WTC11 (cell line): ENCODE measurements at regions of chr20 and their contacts with region 1.

Region 1: DNA sequence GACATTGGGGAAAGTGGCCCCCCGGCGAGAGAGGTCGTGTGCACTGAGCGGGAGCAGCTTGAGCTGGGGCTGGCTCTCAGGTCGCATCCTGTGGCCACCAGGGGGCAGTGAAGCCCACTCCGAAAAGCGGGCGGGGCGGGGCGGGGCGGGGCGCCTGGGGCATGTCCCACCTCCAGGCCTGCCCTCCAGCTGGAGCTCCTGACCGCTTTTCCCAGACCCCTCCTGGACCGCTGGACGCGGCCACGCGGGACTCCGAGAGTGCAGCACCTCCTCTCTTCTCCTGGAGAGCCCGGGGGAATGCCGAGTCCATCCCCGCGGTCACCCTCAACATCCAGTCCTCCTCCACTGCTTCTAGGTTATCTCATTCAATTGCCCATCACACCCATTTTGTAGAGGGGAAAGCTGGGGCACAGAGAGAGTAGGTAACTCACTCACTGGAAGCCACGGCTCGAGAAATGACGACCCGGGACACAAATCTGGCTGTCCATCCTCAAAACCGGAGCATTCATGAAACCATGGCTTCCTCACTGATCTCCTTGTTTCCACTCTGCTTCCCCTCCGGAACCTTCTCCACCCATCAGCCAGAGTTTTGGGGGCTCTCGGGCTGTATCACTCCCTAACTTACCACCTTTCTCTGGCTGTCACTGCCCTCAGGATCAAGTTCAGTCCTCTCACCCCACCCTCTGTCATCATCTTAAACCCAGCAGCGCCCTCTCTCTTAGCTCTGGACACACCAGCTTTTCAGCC is 24.1 kb downstream of the COX4I2 start:
- DNase-seq: peak; percentile 87
- ATAC-seq: peak; percentile 84
- H3K4me3 Mint-ChIP-seq: peak overlapping the region; percentile 74
- H3K27ac Mint-ChIP-seq: peak overlapping the region; percentile 79
- H3K4me1 Mint-ChIP-seq: peaks cover 23% of the 10 kb centered on the region
- H3K27me3 Mint-ChIP-seq: no peaks in the 10 kb centered on the region
- CTCF ChIP-seq: peak; percentile 88

Region 2: DNA sequence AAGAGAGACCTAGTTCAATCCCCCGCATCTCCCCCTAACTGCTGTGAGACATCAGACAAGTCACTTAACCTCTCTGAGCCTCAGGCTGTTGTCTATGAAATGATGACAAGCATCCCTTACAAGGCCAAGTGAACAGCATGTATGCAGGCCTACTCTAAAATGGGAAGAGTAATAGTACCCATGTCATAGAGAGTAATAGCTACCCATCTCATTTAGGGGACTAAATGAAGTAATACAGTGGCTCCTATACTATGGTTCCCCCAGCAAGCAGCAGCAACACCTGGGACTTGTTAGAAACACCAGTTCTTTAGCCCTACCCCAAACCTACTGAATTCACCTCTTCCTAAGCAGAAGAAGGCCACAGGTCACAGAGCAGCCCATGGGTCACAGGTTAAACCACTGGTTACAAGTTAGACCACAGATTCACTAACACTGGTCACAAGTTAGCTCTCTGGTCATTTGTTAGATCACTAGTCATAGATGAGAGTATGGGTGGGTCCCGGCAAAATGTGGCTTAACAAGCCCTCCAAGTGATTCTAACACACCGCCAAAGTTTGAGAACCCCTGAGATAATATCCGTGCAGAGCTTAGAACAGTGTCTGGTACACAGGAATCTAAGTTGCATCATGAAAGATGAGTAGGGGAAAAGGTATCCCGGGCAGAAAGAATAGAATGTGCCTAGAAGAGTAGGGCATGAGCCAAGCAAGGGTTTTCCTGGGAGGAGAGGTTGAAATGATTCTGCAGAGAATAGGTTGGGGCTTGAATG is 188.3 kb before region 1 on chr20:
- CTCF ChIA-PET with region 1: no interaction called
- POLR2A ChIA-PET with region 1: no interaction called
- DNase-seq: no peak
- ATAC-seq: no peak
- H3K4me3 Mint-ChIP-seq: no peak overlapping the region
- H3K27ac Mint-ChIP-seq: no peak overlapping the region
- H3K4me1 Mint-ChIP-seq: no peaks in the 10 kb centered on the region
- H3K27me3 Mint-ChIP-seq: peaks cover 56% of the 10 kb centered on the region
- CTCF ChIP-seq: no peak

Region 3: DNA sequence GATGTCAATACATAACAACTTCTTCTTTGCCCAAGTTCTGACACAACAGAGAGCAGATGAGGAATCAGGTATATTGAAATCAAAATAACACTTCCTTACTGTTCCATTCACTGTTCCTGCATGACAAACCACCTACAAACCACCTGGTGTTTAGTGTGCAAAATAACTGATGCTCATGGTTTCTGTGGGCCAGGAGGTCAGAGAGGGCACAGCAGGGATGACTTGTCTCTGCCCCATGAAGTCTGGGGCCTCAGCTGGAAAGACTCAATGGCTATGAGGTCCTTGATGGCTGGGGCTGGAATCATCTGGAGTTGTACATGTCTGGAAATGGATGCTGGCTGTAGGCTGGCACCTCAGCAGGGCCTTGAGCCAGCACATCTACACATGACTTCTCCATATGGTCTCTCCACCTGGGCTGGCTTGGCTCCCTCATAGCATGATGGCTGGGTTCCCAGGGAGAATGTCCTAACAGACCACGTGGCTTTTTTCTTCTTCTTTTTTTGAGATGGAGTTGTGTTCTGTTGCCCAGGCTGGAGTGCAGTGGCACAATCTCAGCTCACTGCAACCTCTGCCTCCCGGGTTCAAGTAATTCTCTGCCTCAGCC is 31.5 kb before region 1 on chr20:
- CTCF ChIA-PET with region 1: interaction called, 69 read pairs
- POLR2A ChIA-PET with region 1: interaction called, 6 read pairs
- DNase-seq: no peak
- ATAC-seq: no peak
- H3K4me3 Mint-ChIP-seq: no peak overlapping the region
- H3K27ac Mint-ChIP-seq: no peak overlapping the region
- H3K4me1 Mint-ChIP-seq: no peaks in the 10 kb centered on the region
- H3K27me3 Mint-ChIP-seq: no peaks in the 10 kb centered on the region
- CTCF ChIP-seq: no peak

Region 4: GRCh38 chr20:31674895-31675827 is 13.4 kb after region 1 on chr20:
- CTCF ChIA-PET with region 1: interaction called, 49 read pairs
- POLR2A ChIA-PET with region 1: no interaction called
- DNase-seq: no peak
- ATAC-seq: no peak
- H3K4me3 Mint-ChIP-seq: no peak overlapping the region
- H3K27ac Mint-ChIP-seq: peak overlapping the region; percentile 80
- H3K4me1 Mint-ChIP-seq: peaks cover 37% of the 10 kb centered on the region
- H3K27me3 Mint-ChIP-seq: no peaks in the 10 kb centered on the region
- CTCF ChIP-seq: no peak

Region 5: DNA sequence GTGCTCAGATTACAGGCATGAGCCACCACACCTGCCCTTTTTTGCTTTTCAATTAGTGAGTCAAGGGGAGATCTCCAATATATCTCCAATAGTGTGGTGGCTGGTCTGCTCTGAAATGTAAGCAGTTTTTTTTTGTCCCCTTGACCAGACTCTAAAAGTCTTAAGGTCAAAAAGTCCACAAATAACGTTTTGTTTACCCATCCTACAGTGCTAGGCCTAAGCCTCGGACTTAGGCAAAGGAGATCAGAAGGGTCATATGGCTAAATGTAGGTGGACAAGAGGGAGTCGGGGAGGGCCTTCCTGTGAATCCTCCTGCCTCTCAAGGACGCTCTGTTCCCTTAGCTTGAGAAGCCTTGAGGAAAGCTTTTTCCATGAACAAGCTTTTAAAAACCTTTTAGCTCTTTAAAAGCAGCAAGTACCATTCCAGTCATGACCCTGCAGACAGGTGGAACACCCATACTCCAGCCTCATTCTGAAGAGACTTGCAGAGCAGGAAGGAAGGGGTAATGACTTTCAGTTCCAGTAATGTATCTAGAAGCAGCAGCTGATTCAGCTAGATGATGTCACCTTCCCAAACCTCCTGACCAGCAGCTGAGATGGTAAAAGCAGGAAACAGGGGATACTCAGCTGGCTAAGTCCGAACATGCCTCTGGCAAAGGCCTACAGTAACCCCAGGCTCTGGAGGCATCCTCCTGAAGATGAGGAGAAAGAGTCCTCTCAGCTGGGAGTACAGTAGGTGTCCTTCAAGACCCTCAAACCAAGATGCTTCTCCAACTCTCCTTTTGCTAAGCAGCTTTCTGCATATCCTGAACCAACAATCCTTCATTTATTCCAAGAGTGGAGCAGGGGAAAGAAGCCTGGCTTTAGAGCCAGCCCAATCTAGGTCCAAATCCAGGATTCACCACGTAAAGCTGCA is 37.3 kb after region 1 on chr20:
- CTCF ChIA-PET with region 1: interaction called, 32 read pairs
- POLR2A ChIA-PET with region 1: interaction called, 3 read pairs
- DNase-seq: no peak
- ATAC-seq: no peak
- H3K4me3 Mint-ChIP-seq: no peak overlapping the region
- H3K27ac Mint-ChIP-seq: peak overlapping the region; percentile 69; the same call in 1 of the 2 replicates
- H3K4me1 Mint-ChIP-seq: peaks cover 48% of the 10 kb centered on the region
- H3K27me3 Mint-ChIP-seq: no peaks in the 10 kb centered on the region
- CTCF ChIP-seq: no peak

Region 6: DNA sequence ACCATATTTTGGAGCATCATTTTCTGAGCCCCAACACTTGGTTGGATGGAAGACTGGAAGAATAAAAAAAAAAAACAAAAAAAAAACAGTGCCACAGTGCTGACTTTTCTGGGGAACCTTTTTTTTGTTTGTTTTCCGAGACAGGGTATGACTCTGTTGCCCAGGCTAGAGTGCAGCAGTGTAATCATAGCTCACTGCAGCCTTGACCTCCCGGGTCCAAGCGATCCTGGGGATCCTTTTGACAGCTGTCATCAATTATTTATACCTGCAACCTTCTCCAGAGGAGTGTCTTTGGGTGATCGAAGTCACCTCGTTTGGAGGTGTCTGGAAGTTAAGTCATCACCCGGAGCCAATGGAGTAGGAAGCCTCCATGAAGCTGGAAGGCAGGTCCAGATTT is 69.5 kb after region 1 on chr20:
- CTCF ChIA-PET with region 1: interaction called, 25 read pairs
- POLR2A ChIA-PET with region 1: no interaction called
- DNase-seq: no peak
- ATAC-seq: no peak
- H3K4me3 Mint-ChIP-seq: no peak overlapping the region
- H3K27ac Mint-ChIP-seq: no peak overlapping the region
- H3K4me1 Mint-ChIP-seq: no peaks in the 10 kb centered on the region
- H3K27me3 Mint-ChIP-seq: peaks cover 4% of the 10 kb centered on the region
- CTCF ChIP-seq: no peak

Region 7: DNA sequence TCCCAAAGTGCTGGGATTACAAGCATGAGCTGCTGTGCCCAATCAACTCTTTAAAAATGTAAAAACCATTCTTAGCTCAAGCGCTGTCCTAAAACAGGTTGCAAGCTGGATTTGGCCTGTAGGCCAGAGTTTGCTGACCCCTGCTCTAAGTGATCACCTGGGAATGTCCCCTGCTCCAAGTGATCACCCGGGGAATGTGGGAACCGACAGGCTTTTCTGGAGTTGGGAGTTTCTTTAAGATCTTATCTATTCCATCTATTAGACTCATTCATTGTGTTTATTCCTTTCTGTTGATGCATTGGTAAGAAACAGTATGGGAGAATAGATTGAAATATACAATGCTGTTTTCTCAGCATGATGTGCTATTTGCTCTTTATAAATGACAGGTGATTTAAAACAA is 133.6 kb after region 1 on chr20:
- CTCF ChIA-PET with region 1: no interaction called
- POLR2A ChIA-PET with region 1: no interaction called
- DNase-seq: no peak
- ATAC-seq: no peak
- H3K4me3 Mint-ChIP-seq: no peak overlapping the region
- H3K27ac Mint-ChIP-seq: no peak overlapping the region
- H3K4me1 Mint-ChIP-seq: no peaks in the 10 kb centered on the region
- H3K27me3 Mint-ChIP-seq: no peaks in the 10 kb centered on the region
- CTCF ChIP-seq: no peak